Psoas muscle (tissue), 8 donors: ENCODE measurements at regions of chr5 and their contacts with region 1.

Region 1: DNA sequence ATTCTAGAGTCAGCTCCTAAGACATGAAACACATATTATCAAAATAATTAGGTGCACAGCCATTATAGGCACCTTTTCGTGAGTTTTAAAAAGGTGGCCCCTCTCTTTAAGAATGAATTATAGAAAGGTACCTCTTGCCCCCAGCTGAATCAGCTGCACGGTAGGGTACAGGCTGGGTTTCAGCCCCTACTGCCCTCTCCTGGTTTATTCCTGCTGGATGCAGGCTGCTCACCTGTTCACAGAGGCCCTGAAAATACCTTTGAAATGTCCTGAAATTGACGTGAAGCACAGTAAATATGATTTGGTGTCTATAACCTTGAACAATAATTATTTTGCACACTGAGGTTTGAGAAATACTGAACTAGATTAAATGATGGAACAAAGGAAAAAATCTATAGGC is 504.8 kb upstream of the SGCD start:
- DNase-seq: no peak
- ATAC-seq: peak in 3 of 4 donors; percentile 40 to 80 (median 62)
- H3K4me3 ChIP-seq: no peak overlapping the region
- H3K27ac ChIP-seq: no peak overlapping the region
- H3K4me1 ChIP-seq: peaks cover 4% of the 10 kb centered on the region
- H3K27me3 ChIP-seq: no peaks in the 10 kb centered on the region
- CTCF ChIP-seq: no peak

Region 2: GRCh38 chr5:155729684-155730059 is 92.5 kb before region 1 on chr5:
- intact Hi-C with region 1: loop called (anchors 5 kb)
- DNase-seq: peak; percentile 19 to 75
- ATAC-seq: peak; percentile 40 to 58 (median 54)
- H3K4me3 ChIP-seq: peak overlapping the region; percentile 73
- H3K27ac ChIP-seq: peak overlapping the region; percentile 74
- H3K4me1 ChIP-seq: peaks cover 34% of the 10 kb centered on the region
- H3K27me3 ChIP-seq: peaks cover 0 to 12% (median 0%) of the 10 kb centered on the region in 3 donors
- CTCF ChIP-seq: no peak